Uterus (tissue), 4 donors: ENCODE measurements at regions of chr2 and their contacts with region 1.

Region 1: GRCh38 chr2:190382851-190383250 is 25.3 kb upstream of the MFSD6 start:
- DNase-seq: peak in 1 of 2 donors; percentile 26
- H3K4me3 ChIP-seq: no peak overlapping the region
- H3K27ac ChIP-seq: no peak overlapping the region
- H3K4me1 ChIP-seq: no peaks in the 10 kb centered on the region
- H3K27me3 ChIP-seq: no peaks in the 10 kb centered on the region
- CTCF ChIP-seq: peak; percentile 46 to 71 (median 58)
- POLR2A ChIP-seq: no peak

Region 2: GRCh38 chr2:190415794-190416775 is 33.2 kb after region 1 on chr2:
- intact Hi-C with region 1: no loop called
- DNase-seq: no peak
- H3K4me3 ChIP-seq: no peak overlapping the region
- H3K27ac ChIP-seq: peak overlapping the region in 1 of 2 donors; percentile 47
- H3K4me1 ChIP-seq: peaks cover 0 to 4% of the 10 kb centered on the region in 2 donors
- H3K27me3 ChIP-seq: no peaks in the 10 kb centered on the region
- CTCF ChIP-seq: no peak
- POLR2A ChIP-seq: no peak

Region 3: DNA sequence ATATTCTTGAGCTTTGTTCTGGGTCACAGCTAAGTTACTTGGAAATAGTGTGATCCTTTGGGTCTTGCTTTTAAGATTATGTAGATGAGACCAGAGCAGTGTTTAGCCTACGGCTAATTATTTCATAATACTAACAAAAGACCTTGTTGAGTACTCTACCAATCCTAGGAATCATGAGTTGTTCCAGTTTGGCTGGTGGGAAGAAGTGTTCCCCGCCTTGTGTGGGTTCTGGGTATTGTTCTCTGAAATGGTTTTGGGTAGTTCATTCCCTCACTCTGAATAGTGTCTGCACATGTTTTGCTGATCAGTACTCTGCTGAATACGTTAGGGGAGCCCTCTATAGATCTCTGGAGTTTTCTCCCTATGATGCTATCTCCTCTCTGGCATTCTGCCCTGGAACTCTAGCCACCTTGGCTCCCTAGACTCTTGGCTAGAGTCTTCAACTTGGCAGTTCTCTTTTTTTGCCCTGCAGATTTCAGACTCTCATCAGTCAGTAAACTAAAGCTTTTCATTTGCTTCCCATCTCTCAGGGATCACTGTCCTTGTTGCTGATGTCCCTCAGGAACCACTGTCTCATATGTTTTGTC is 103.3 kb after region 1 on chr2:
- intact Hi-C with region 1: no loop called
- DNase-seq: no peak
- H3K4me3 ChIP-seq: no peak overlapping the region
- H3K27ac ChIP-seq: no peak overlapping the region
- H3K4me1 ChIP-seq: no peaks in the 10 kb centered on the region
- H3K27me3 ChIP-seq: no peaks in the 10 kb centered on the region
- CTCF ChIP-seq: no peak
- POLR2A ChIP-seq: no peak

Region 4: GRCh38 chr2:190507135-190507534 is 124.3 kb after region 1 on chr2:
- intact Hi-C with region 1: loop called (anchors 10 kb)
- DNase-seq: peak in 1 of 2 donors; percentile 30
- H3K4me3 ChIP-seq: no peak overlapping the region
- H3K27ac ChIP-seq: peak overlapping the region in 1 of 2 donors; percentile 11
- H3K4me1 ChIP-seq: no peaks in the 10 kb centered on the region
- H3K27me3 ChIP-seq: no peaks in the 10 kb centered on the region
- CTCF ChIP-seq: no peak
- POLR2A ChIP-seq: no peak